Vagina (tissue), 2 donors: ENCODE measurements at regions of chr20 and their contacts with region 1.

Region 1: GRCh38 chr20:14030991-14031390 is 35.7 kb downstream of the MACROD2 start:
- DNase-seq: no peak
- H3K4me3 ChIP-seq: no peak overlapping the region
- H3K27ac ChIP-seq: no peak overlapping the region
- H3K4me1 ChIP-seq: no peaks in the 10 kb centered on the region
- H3K27me3 ChIP-seq: no peaks in the 10 kb centered on the region
- CTCF ChIP-seq: no peak
- POLR2A ChIP-seq: no peak

Region 2: GRCh38 chr20:13947719-13948118 is 83.3 kb before region 1 on chr20:
- intact Hi-C with region 1: no loop called
- DNase-seq: no peak
- H3K4me3 ChIP-seq: no peak overlapping the region
- H3K27ac ChIP-seq: no peak overlapping the region
- H3K4me1 ChIP-seq: no peaks in the 10 kb centered on the region
- H3K27me3 ChIP-seq: no peaks in the 10 kb centered on the region
- CTCF ChIP-seq: no peak
- POLR2A ChIP-seq: no peak

Region 3: GRCh38 chr20:14935285-14935684 is 904.3 kb after region 1 on chr20:
- intact Hi-C with region 1: loop called (anchors 5 kb)
- DNase-seq: no peak
- H3K4me3 ChIP-seq: no peak overlapping the region
- H3K27ac ChIP-seq: no peak overlapping the region
- H3K4me1 ChIP-seq: no peaks in the 10 kb centered on the region
- H3K27me3 ChIP-seq: no peaks in the 10 kb centered on the region
- CTCF ChIP-seq: no peak
- POLR2A ChIP-seq: no peak

Region 4: DNA sequence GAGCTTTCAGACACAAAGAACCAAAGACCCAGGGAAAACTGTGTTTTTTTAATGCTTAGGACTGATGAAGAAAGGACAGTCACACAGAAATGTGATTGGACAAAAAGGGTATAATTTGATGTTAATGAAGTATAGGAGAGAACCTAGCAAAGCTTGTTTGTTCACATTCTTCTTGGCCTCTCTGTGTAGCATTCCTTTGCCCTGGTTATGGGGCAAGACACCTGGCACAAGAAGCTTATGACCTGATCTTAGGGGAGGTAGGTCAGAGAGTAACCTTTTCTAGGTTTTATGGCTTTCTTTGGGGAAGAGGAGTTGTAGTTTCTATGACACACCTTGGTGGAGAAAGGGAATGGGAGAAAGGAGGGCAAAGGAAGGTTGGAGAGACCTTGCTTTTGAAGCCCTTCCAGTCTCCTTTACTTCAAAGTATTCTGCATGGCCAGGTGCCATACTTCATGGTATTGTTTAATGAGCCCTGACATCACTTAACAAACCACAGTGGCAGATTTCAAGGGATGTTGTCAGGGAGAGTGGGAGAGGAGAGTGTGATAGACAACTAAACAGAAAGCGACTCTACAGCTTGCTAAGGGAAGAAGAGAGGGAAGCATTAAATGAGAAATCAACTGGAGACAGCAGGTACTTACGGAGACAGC is 1008.2 kb after region 1 on chr20:
- intact Hi-C with region 1: no loop called
- DNase-seq: no peak
- H3K4me3 ChIP-seq: no peak overlapping the region
- H3K27ac ChIP-seq: no peak overlapping the region
- H3K4me1 ChIP-seq: peaks cover 3% of the 10 kb centered on the region
- H3K27me3 ChIP-seq: no peaks in the 10 kb centered on the region
- CTCF ChIP-seq: no peak
- POLR2A ChIP-seq: no peak